Dorsolateral prefrontal cortex (tissue), 120 donors: ENCODE measurements at regions of chr9 and their contacts with region 1.

Region 1: DNA sequence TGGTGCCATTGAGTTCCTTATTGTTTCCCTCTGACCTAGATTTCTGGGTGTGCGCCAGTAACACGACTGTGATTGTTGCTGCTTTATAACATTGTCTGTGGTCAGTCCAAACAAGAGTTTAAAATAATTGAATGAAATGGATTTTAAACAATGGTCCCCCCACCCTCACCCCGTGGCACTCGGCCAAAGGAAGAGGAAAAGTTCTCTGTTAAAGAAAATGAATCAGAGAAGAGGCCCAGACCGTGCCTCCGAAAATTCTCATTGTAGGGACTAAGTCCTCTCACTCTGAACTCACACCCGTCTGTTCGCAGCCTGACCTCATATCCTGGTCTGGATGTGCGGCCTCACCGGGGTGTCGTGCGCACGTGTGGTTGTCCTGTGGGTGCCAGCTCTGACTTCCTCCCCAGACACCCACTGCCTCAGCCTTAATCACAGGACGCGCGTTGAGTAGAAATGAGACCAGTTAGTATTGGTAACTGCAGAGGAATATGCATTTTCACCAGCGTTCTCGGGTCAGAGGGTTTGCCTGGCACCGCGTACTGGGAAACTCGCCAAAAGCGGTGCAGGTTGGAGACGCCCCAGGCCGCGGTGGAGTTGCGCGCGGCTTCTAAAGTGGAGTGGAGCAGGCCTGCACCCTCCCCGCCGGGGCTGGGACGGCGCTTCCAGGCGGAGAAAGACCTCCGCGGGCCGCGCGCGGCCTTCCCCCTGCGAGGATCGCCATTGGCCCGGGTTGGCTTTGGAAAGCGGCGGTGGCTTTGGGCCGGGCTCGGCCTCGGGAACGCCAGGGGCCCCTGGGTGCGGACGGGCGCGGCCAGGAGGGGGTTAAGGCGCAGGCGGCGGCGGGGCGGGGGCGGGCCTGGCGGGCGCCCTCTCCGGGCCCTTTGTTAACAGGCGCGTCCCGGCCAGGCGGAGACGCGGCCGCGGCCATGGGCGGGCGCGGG is at the start of gene ABL1:
- DNase-seq: peak in 8 of 10 donors; percentile 46 to 74 (median 58)
- H3K4me3 ChIP-seq: peak within 1 kb of the TSS; percentile 55 to 89 (median 78)
- H3K27ac ChIP-seq: peak within 1 kb of the TSS; percentile 85 to 98 (median 95)
- H3K27me3 ChIP-seq: no peaks in the 10 kb centered on the region
- CTCF ChIP-seq: peak in 3 of 56 donors; percentile 17 to 22 (median 18)
- total RNA-seq, gene ABL1: 32.9 to 97.5 (median 48.2) TPM

Region 2: GRCh38 chr9:130199605-130200004 is 635.0 kb before region 1 on chr9:
- intact Hi-C with region 1: no loop called
- DNase-seq: no peak
- H3K4me3 ChIP-seq: peak overlapping the region in 11 of 59 donors; percentile 3 to 50 (median 33)
- H3K27ac ChIP-seq: peak overlapping the region in 58 of 59 donors; percentile 12 to 94 (median 80)
- H3K27me3 ChIP-seq: no peaks in the 10 kb centered on the region
- CTCF ChIP-seq: no peak

Region 3: DNA sequence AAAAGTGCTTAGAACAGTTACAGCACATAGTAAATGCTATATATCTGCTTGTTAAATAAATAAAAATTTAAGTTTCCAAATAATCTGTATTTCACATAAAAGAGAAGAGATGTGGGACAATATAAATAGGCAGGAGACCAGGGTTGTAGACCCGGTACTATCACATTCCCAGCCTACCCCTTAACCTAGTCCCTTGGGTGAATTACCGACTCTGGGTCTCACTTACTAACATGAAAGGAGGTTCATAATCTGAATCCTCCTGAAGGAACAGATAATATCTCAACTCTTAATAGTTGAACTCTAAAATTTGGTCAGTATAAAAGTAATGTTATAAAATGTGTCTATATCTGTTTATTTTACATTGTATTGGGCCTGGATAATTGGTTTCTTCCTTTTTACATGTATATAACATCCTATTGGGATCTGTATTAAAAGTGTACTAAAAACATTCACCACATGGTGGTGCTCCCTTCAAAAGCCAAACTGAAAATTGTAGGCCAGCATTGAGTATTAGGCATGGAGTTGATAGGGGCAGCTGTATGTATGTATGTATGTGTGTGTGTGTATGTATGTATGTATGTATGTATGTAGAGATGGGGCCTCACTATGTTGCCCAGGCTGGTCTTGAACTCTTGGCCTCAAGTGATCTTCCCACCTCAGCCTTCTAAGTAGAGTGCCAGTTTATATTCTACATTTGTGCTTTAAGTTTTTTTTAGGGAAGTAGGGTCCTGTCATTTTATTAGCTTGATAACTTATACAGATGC is 63.8 kb before region 1 on chr9:
- intact Hi-C with region 1: loop called (anchors 5 kb)
- DNase-seq: no peak
- H3K4me3 ChIP-seq: no peak overlapping the region
- H3K27ac ChIP-seq: no peak overlapping the region
- H3K27me3 ChIP-seq: no peaks in the 10 kb centered on the region
- CTCF ChIP-seq: peak; percentile 53 to 87 (median 75)